Activated CD8-positive, alpha-beta T cell treated with anti-CD3 and anti-CD28 coated beads, Interleukin-2, amount 10 ng/mL, durations not matched to agents 7 days and 5 days (primary cell): ENCODE measurements at regions of chr15 and their contacts with region 1.

Region 1: DNA sequence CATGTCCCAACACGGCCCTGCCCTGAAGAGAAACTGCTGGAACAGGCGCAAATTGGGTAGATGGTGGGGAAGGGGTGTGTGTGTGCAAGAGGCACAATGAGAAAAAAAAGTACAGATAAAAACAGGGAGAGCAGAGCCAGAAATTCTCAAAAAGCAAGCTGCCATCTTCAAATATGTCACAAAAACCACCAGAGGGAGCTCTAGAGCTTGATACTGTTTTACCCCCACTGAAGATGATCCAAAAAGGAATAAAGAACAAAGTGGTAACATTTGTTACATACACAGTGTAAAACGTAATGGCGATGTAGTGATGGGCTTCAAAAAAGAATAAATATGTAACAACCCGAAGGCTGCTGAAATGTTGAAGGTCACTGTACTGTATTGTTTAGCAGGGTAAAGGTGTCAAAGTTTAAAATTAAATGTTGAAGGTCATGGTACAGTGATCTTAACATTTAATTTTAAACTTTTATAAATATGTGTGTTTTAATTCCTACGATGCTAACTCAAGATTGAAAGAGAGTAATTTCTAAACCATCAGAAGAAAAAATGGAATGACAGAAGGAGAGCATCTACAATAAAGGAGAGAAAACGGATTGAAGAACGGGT is 6.0 kb downstream of the SNRPA1 start:
- DNase-seq: peak; percentile 51
- ATAC-seq: peak; percentile 54
- H3K4me3 Mint-ChIP-seq: no peak overlapping the region
- H3K27ac Mint-ChIP-seq: peak overlapping the region; percentile 52
- H3K4me1 Mint-ChIP-seq: peaks cover 55% of the 10 kb centered on the region
- H3K27me3 Mint-ChIP-seq: no peaks in the 10 kb centered on the region

Region 2: GRCh38 chr15:101070502-101071273 is 218.3 kb before region 1 on chr15:
- CTCF ChIA-PET with region 1: no interaction called
- POLR2A ChIA-PET with region 1: no interaction called
- DNase-seq: no peak
- ATAC-seq: no peak
- H3K4me3 Mint-ChIP-seq: no peak overlapping the region
- H3K27ac Mint-ChIP-seq: peak overlapping the region; percentile 70
- H3K4me1 Mint-ChIP-seq: peaks cover 16% of the 10 kb centered on the region
- H3K27me3 Mint-ChIP-seq: peaks cover 3% of the 10 kb centered on the region

Region 3: GRCh38 chr15:101232677-101233076 is 56.3 kb before region 1 on chr15:
- CTCF ChIA-PET with region 1: no interaction called
- POLR2A ChIA-PET with region 1: no interaction called
- DNase-seq: no peak
- ATAC-seq: no peak
- H3K4me3 Mint-ChIP-seq: no peak overlapping the region
- H3K27ac Mint-ChIP-seq: peak overlapping the region; percentile 8
- H3K4me1 Mint-ChIP-seq: peaks cover 63% of the 10 kb centered on the region
- H3K27me3 Mint-ChIP-seq: no peaks in the 10 kb centered on the region

Region 4: GRCh38 chr15:101277038-101277882 is 11.8 kb before region 1 on chr15 and contains the start of gene SELENOS:
- CTCF ChIA-PET with region 1: interaction called, 19 read pairs
- POLR2A ChIA-PET with region 1: interaction called, 30 read pairs
- DNase-seq: peak; percentile 90
- ATAC-seq: peak; percentile 96
- H3K4me3 Mint-ChIP-seq: peak within 1 kb of the TSS; percentile 96
- H3K27ac Mint-ChIP-seq: peak within 1 kb of the TSS; percentile 93
- H3K4me1 Mint-ChIP-seq: peaks cover 25% of the 10 kb centered on the region
- H3K27me3 Mint-ChIP-seq: no peaks in the 10 kb centered on the region
- total RNA-seq, gene SELENOS: 29.8 to 32.2 TPM

Region 5: GRCh38 chr15:101309436-101310157 is 20.6 kb after region 1 on chr15:
- CTCF ChIA-PET with region 1: no interaction called
- POLR2A ChIA-PET with region 1: no interaction called
- DNase-seq: no peak
- ATAC-seq: no peak
- H3K4me3 Mint-ChIP-seq: no peak overlapping the region
- H3K27ac Mint-ChIP-seq: no peak overlapping the region
- H3K4me1 Mint-ChIP-seq: no peaks in the 10 kb centered on the region
- H3K27me3 Mint-ChIP-seq: no peaks in the 10 kb centered on the region

Region 6: DNA sequence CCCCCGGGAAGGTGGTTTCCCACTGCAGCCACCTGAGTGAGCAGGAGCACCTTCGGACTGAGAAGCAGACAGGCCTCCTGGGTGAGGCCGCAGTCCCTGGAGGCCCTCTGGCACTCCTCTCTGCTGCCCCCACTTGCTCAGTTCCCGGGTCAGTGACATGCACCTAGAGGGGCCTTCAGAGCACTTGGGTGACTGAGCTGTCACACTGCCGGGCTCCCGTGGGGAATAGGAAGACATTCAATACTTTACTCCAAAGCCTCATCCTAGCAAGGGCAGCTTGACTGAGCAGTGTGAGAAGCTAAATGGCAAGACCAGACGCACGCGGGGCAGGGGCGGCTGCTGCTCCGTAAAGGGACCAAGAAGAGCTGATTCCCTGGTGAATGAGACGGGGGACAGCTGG is 137.9 kb after region 1 on chr15:
- CTCF ChIA-PET with region 1: no interaction called
- POLR2A ChIA-PET with region 1: no interaction called
- DNase-seq: no peak
- ATAC-seq: no peak
- H3K4me3 Mint-ChIP-seq: no peak overlapping the region
- H3K27ac Mint-ChIP-seq: no peak overlapping the region
- H3K4me1 Mint-ChIP-seq: no peaks in the 10 kb centered on the region
- H3K27me3 Mint-ChIP-seq: no peaks in the 10 kb centered on the region